Activated naive CD4-positive, alpha-beta T cell treated with anti-CD3 and anti-CD28 coated beads for 36 hours (primary cell): ENCODE measurements at regions of chr3 and their contacts with region 1.

Region 1: DNA sequence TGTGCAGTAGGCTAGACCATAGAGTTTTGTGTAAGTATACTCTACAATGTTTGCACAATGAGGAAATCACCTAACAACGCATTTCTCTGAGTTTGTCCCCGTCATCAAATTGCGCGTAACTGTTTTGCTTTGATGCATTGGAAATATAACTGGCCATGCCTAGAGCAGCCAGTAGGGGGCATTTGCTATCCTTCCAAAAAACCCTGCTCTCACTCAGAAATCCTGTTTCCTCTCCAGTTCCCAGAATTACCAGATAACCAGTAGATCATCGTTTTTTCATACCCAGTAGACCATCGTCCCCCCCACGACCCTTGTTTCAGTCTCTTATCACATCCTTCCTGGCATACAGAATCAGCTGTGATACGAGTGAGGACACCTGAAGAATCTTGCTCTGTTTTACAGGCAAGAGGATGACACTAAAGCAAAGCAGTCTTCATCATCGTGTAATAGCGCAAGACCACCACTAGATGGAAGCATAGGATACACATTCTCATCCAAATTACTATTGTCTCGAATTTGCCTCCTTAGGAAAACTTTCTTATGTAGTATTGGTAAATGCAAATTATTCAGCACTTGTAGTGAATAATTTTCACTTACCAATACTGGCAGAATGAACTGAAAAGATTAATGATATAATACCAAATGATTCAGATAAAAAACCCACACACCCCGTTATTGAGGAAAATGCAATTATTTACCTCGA is 4.4 kb upstream of the GABRR3 start:
- DNase-seq: peak; percentile 86
- H3K4me3 Mint-ChIP-seq: peak overlapping the region; percentile 88
- H3K27ac Mint-ChIP-seq: peak overlapping the region; percentile 98
- H3K4me1 Mint-ChIP-seq: peaks cover 6% of the 10 kb centered on the region
- H3K27me3 Mint-ChIP-seq: no peaks in the 10 kb centered on the region

Region 2: DNA sequence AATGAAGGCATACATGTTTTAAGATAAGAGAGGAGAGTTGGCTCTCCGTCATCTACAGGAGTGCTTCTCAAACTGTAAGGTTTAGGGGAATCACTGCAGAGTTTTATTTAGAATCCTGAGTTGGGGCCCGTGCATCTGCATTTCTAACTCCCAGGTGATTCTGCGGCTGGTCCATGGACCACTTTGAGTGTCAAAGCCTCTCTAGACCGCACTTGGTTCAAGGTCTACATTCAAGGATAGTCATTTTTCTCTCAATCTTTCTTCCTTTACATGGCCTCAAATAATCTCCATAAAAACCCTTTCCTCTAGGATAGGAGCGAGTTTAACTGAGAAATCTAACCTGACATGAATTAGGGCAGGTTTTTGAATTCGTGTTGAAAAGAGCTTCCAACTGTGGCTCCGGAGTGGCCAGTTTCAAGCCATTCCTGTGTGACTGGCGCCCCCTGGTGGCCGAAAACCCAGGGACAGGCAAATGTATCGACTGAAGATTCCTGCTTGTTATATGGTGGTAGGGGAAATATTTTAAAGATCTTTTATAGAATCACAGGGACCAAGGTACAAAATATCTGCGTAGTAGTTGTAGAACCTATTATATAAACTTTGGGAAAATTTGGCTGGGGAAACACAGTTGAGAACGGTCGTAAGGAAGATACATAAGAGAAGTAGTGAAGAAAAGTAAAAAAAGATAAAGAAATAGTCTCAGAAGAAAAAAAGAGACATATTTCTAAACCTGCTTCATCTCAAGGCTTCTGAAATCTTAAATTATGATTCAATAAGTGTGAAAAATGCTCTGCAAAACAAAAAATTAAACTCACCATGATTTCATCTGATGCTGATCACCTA is 16.3 kb before region 1 on chr3:
- CTCF ChIA-PET with region 1: interaction called, 32 read pairs
- intact Hi-C with region 1: no loop called
- DNase-seq: peak; percentile 96
- H3K4me3 Mint-ChIP-seq: no peak overlapping the region
- H3K27ac Mint-ChIP-seq: no peak overlapping the region
- H3K4me1 Mint-ChIP-seq: peaks cover 5% of the 10 kb centered on the region
- H3K27me3 Mint-ChIP-seq: no peaks in the 10 kb centered on the region

Region 3: GRCh38 chr3:98329392-98330124 is 290.1 kb after region 1 on chr3:
- CTCF ChIA-PET with region 1: interaction called, 51 read pairs
- intact Hi-C with region 1: loop called (anchors 1 kb)
- DNase-seq: peak; percentile 57
- H3K4me3 Mint-ChIP-seq: no peak overlapping the region
- H3K27ac Mint-ChIP-seq: no peak overlapping the region
- H3K4me1 Mint-ChIP-seq: no peaks in the 10 kb centered on the region
- H3K27me3 Mint-ChIP-seq: peaks cover 16% of the 10 kb centered on the region

Region 4: GRCh38 chr3:98522244-98523090 is 483.0 kb after region 1 on chr3 and contains the start of gene CLDND1:
- CTCF ChIA-PET with region 1: no interaction called
- intact Hi-C with region 1: loop called (anchors 1 kb)
- DNase-seq: peak; percentile 96
- H3K4me3 Mint-ChIP-seq: peak within 1 kb of the TSS; percentile 89
- H3K27ac Mint-ChIP-seq: peak within 1 kb of the TSS; percentile 93
- H3K4me1 Mint-ChIP-seq: peaks cover 43% of the 10 kb centered on the region
- H3K27me3 Mint-ChIP-seq: no peaks in the 10 kb centered on the region
- total RNA-seq, gene CLDND1: 91.7 to 94.6 TPM

Region 5: DNA sequence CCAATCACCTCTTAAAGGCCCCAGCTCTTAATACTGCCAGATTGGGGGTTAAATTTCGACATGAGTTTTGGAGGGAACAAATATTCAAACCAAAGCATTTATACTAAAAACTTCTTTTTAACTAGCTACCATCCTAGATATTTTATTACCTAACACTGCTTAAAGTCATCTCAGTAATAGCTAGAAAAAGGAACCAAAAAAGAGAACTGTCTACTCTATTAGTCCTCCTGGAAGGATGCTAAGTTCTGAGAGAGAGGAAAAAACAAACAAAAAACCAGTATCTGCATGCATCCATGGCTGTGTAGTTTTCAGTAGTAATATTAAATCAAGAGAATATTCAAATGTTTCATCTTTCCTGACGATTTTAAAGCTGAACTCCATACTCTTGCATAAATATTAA is 548.2 kb after region 1 on chr3:
- CTCF ChIA-PET with region 1: no interaction called
- intact Hi-C with region 1: no loop called
- DNase-seq: no peak
- H3K4me3 Mint-ChIP-seq: no peak overlapping the region
- H3K27ac Mint-ChIP-seq: no peak overlapping the region
- H3K4me1 Mint-ChIP-seq: peaks cover 24% of the 10 kb centered on the region
- H3K27me3 Mint-ChIP-seq: no peaks in the 10 kb centered on the region

Region 6: GRCh38 chr3:98602078-98602678 is 562.7 kb after region 1 on chr3:
- CTCF ChIA-PET with region 1: interaction called, 3 read pairs
- intact Hi-C with region 1: loop called (anchors 1 kb)
- DNase-seq: peak; percentile 50
- H3K4me3 Mint-ChIP-seq: no peak overlapping the region
- H3K27ac Mint-ChIP-seq: no peak overlapping the region
- H3K4me1 Mint-ChIP-seq: no peaks in the 10 kb centered on the region
- H3K27me3 Mint-ChIP-seq: peaks cover 8% of the 10 kb centered on the region

Region 7: DNA sequence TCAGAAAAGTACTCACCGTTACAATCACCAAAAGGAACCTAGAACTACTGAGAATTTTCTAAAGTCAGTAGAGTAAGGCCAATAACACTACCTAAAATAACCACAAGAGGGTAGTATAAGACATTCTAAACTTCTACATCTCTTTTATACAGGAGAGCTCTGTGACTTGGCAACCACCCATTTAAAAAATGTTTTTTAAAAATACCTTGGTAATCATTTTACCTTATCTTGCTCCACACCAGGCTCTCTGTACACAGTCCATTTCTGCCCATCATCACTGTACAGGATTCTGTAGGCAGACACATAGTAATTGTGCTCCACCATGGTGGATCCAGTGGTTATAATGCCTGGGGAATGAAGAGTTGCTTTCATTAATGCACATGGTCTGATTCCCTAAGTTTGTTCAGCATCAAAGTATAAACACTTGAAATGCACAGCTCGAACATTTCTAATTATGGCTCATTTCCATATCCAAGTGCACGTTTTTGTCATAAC is 778.1 kb after region 1 on chr3:
- CTCF ChIA-PET with region 1: no interaction called
- intact Hi-C with region 1: loop called (anchors 1 kb)
- DNase-seq: no peak
- H3K4me3 Mint-ChIP-seq: no peak overlapping the region
- H3K27ac Mint-ChIP-seq: no peak overlapping the region
- H3K4me1 Mint-ChIP-seq: no peaks in the 10 kb centered on the region
- H3K27me3 Mint-ChIP-seq: no peaks in the 10 kb centered on the region

Region 8: DNA sequence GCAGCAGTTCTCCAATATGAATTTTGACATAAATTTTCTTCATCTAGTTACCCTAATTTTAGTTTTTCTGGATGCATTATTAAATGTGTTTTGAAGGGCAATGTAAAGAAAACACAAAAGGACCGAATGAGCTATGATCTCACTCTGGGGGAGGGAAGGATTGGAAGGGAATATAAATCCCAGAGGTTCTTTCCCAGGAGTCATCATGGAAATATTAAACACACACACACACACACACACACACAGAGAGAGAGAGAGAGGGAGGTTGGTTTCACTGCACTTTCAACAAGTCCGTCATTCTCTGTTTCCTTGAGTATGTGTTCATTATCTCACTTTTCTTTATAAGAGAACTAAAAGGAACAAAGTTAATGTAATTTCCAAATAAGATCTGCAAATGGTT is 932.7 kb after region 1 on chr3:
- CTCF ChIA-PET with region 1: no interaction called
- intact Hi-C with region 1: loop called (anchors 5 kb)
- DNase-seq: no peak
- H3K4me3 Mint-ChIP-seq: no peak overlapping the region
- H3K27ac Mint-ChIP-seq: no peak overlapping the region
- H3K4me1 Mint-ChIP-seq: peaks cover 6% of the 10 kb centered on the region
- H3K27me3 Mint-ChIP-seq: peaks cover 7% of the 10 kb centered on the region

Region 9: DNA sequence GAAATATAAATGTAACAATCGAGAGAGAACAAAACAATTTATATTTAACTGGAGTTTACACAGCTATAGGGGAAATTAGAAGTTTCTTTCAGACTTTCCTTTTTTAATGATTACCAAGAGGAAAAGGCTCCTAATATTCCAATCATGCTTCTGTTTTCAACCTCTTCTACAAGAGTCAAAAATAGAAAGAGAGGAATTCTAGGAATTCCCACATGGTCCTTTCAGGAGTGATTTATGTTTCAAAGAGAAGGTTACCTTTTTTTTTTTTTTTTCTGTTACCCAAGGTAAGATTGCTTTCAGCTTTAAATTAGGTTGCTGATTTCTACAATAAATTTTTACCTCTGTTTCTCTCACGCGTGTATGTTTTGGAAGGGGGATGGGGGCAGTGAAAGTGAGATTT is 1217.3 kb after region 1 on chr3:
- CTCF ChIA-PET with region 1: no interaction called
- intact Hi-C with region 1: no loop called
- DNase-seq: no peak
- H3K4me3 Mint-ChIP-seq: no peak overlapping the region
- H3K27ac Mint-ChIP-seq: no peak overlapping the region
- H3K4me1 Mint-ChIP-seq: no peaks in the 10 kb centered on the region
- H3K27me3 Mint-ChIP-seq: no peaks in the 10 kb centered on the region